ENCODE measurements at regions of chr9 and their contacts with region 1.

Region 1: DNA sequence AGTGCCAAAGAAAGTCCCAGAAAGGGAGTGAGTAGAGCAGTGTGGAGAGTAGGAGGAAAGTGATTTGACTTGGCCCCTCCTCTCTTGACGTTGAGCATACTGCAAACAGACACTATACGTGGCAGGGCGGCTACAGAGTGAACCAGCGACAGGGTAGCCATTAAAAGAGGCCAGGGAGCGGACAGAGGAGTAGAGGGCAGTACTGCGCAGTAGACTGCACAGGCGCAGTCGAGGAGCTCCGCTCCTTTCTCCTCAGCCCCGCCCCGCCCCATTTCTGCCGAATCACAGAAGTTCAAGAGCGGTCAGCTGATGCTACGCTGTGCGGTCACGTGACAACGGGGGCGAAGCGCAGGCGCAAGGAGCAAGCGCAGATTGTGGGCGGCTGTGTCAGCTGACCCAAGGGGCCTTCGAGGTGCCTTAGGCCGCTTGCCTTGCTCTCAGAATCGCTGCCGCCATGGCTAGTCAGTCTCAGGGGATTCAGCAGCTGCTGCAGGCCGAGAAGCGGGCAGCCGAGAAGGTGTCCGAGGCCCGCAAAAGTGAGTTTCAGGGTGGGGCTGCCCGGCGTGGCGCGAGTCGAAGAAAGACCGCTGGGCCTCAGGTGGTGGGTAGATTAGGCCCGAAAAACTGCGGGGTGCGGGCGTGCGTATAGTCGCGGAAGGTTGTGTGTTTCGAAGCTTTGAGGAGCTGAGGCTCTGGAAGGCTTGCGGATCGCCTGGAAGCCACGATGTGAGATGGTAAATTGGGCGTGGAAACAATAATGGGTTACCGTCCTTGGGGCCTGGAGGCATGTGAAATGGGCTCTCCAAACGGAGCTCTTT is at the start of gene ATP6V1G1:
- DNase-seq: peak; percentile 99 to 100
- ATAC-seq: peak; percentile 99 to 100 (median 99)
- H3K4me3 ChIP-seq: peak within 1 kb of the TSS; percentile 63 to 100 (median 78)
- H3K27ac ChIP-seq: peak within 1 kb of the TSS; percentile 49 to 96 (median 84)
- H3K4me1 ChIP-seq: peaks cover 11 to 47% (median 42%) of the 10 kb centered on the region in 9 donors
- H3K27me3 ChIP-seq: no peaks in the 10 kb centered on the region
- CTCF ChIP-seq: peak in 3 of 9 donors; percentile 43 to 50 (median 49)
- total RNA-seq, gene ATP6V1G1: 53.1 to 80.3 (median 64.5) TPM

Region 2: GRCh38 chr9:114385412-114386181 is 202.0 kb before region 1 on chr9:
- intact Hi-C with region 1: loop called in 2 of 10 experiments (anchors 10 kb)
- DNase-seq: peak; percentile 48 to 68
- ATAC-seq: peak in 7 of 8 donors; percentile 7 to 61 (median 25)
- H3K4me3 ChIP-seq: peak overlapping the region in 7 of 10 donors; percentile 23 to 71 (median 67)
- H3K27ac ChIP-seq: peak overlapping the region; percentile 3 to 96 (median 87)
- H3K4me1 ChIP-seq: peaks cover 17 to 93% (median 80%) of the 10 kb centered on the region in 9 donors
- H3K27me3 ChIP-seq: no peaks in the 10 kb centered on the region
- CTCF ChIP-seq: no peak

Region 3: DNA sequence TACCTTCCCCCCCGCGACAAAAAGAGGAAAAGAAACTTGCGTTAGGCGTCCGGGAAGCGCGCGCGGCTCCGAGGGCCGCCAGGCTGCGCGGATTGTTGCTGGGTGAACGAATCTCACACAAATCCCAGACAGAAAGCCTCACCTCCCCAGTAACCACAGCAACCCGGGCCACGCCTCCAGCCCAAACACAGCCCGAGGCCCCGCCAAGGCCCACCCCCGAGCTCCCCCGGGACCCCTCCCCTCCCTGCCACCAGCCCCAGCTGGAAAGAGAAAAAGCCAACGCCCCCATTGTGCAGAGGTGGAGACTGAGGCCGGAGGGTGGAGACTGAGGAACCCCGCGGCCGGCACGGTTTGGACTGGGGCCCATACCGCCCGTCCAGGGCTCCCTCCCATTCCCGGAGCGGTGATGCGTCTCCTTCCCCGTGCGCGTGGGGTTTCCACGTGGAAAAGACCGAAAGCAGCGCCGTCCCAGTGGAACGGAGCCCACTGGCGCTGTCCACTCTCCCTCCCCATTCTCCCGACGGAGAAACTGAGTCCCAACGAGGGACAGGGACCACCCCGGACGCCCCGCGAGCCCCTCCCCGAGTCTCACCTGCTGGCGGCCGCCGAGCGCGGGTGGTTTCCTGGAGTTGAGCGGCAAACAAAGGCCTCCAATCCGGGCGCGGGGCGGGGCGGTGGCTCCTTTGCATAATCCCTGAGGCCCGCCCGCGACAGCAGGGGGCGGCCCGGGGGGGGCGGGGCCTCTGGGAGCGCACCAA is 189.6 kb before region 1 on chr9:
- intact Hi-C with region 1: loop called in 2 of 10 experiments (anchors 10 kb)
- DNase-seq: peak; percentile 96
- ATAC-seq: peak; percentile 94 to 97 (median 96)
- H3K4me3 ChIP-seq: peak overlapping the region; percentile 48 to 91 (median 78)
- H3K27ac ChIP-seq: peak overlapping the region; percentile 36 to 90 (median 79)
- H3K4me1 ChIP-seq: peaks cover 3 to 46% (median 25%) of the 10 kb centered on the region in 9 donors
- H3K27me3 ChIP-seq: no peaks in the 10 kb centered on the region
- CTCF ChIP-seq: peak in 3 of 9 donors; percentile 17 to 36 (median 17)

Region 4: DNA sequence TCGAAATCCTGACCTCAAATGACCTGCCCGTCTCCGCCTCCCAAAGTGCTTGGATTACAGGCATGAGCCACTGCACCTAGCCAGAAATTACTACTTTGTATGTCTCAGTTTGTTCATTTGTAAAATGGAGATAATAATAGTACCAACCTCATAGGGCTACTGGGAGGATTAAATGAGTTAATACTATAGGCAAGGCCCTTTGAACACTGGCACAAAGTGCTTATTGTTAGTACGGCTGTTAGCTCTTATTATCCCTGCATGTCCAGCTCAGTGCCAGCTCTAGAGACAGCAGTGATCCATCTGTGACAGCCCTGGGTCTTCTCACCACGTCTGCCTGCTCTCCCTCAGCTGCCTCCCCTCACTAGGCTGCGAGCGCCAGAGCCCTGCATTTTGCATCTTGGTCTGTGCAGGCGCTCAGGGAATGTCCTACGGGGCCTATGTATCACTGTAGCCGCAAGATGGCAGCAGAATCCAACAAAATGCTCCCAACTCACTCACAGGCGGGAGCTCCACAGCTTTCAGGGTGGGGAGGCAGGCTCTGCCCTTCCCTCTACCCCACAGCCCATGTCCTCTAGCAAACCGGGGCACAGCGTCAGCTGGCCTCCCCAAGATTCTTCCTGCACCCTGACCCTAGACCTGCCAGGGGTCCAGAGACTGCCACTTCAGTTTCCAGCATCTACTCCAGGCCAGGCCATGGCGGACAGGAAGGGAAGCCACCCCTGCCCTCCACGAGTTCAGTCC is 182.1 kb before region 1 on chr9:
- intact Hi-C with region 1: loop called in 1 of 10 experiments (anchors 10 kb)
- DNase-seq: peak; percentile 52 to 84
- ATAC-seq: peak; percentile 87 to 95 (median 91)
- H3K4me3 ChIP-seq: no peak overlapping the region
- H3K27ac ChIP-seq: no peak overlapping the region
- H3K4me1 ChIP-seq: peaks cover 0 to 6% (median 0%) of the 10 kb centered on the region in 9 donors
- H3K27me3 ChIP-seq: peaks cover 0 to 3% (median 0%) of the 10 kb centered on the region in 7 donors
- CTCF ChIP-seq: peak; percentile 47 to 93 (median 85)

Region 5: GRCh38 chr9:114487607-114488300 is 99.8 kb before region 1 on chr9:
- intact Hi-C with region 1: no loop called
- DNase-seq: peak in 1 of 2 donors; percentile 62
- ATAC-seq: peak in 6 of 8 donors; percentile 70 to 92 (median 80)
- H3K4me3 ChIP-seq: no peak overlapping the region
- H3K27ac ChIP-seq: no peak overlapping the region
- H3K4me1 ChIP-seq: peaks cover 0 to 8% (median 0%) of the 10 kb centered on the region in 9 donors
- H3K27me3 ChIP-seq: peaks cover 0 to 33% (median 3%) of the 10 kb centered on the region in 7 donors
- CTCF ChIP-seq: peak; percentile 30 to 87 (median 69)

Region 6: GRCh38 chr9:114880291-114880751 is 292.7 kb after region 1 on chr9:
- intact Hi-C with region 1: no loop called
- DNase-seq: no peak
- ATAC-seq: no peak
- H3K4me3 ChIP-seq: no peak overlapping the region
- H3K27ac ChIP-seq: no peak overlapping the region
- H3K4me1 ChIP-seq: peaks cover 0 to 6% (median 0%) of the 10 kb centered on the region in 9 donors
- H3K27me3 ChIP-seq: no peaks in the 10 kb centered on the region
- CTCF ChIP-seq: no peak

Measured in heart right ventricle (tissue), 16 donors.